Activated B cell treated with CpG ODN at 0.5 μM for 24 hours (primary cell): ENCODE measurements at regions of chr16 and their contacts with region 1.

Region 1: DNA sequence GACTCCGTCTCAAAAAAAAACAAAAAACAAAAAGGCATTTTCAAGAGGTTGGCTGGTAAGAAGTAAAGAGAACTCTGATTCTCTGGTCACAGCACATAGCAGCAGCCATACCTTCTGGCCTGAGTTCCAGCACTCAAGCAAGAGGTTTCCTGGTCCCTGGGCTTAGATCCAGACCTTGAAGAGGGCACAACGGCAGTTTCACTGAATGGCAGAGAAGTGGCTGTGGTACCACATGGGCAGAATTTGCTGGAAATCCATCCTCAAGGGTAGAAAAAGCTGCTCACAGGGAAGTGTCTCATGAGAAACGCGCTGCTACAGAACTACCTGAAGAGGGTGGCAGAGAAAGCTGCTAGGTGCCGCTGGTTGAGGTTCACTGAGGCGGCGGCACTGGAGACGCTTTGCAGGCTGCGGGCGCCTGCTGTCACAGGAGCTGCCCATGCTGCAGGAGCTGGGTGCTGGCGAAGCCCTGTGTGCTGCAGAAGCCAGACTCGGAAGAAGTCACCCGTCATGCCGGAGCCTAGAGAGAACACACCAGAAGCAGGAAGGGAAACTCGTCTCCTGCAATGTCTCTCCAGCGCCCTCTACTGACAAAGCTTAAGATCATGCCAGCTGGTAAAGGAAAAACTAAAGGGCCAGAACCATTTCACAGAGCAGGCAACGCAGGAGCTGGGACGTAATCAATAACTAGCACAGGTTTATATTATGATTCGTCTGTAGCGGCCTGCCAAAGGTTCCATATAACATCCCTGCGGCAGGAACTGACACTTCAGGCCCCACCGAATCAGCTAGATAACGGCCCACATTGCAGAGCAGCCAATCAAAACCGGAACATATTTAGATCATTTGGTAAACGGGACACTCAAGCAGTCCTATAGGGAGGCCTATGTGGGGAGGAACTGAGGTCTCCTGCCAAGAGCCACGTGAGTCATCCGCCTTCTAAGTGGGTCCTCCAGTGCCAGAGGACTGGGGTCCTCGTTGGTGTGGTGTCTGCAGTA is 5.4 kb upstream of the ZNF213 start:
- DNase-seq: peak; percentile 55
- ATAC-seq: peak; percentile 71
- H3K4me3 Mint-ChIP-seq: peak overlapping the region; percentile 92
- H3K27ac Mint-ChIP-seq: peak overlapping the region; percentile 89
- H3K4me1 Mint-ChIP-seq: peaks cover 43% of the 10 kb centered on the region
- H3K27me3 Mint-ChIP-seq: no peaks in the 10 kb centered on the region
- CTCF ChIP-seq: peak; percentile 95

Region 2: GRCh38 chr16:3003582-3004302 is 125.7 kb before region 1 on chr16:
- CTCF ChIA-PET with region 1: interaction called, 14 read pairs
- POLR2A ChIA-PET with region 1: interaction called, 5 read pairs
- intact Hi-C with region 1: no loop called
- DNase-seq: peak; percentile 87
- ATAC-seq: peak; percentile 98
- H3K4me3 Mint-ChIP-seq: peak overlapping the region; percentile 67
- H3K27ac Mint-ChIP-seq: peak overlapping the region; percentile 53
- H3K4me1 Mint-ChIP-seq: peaks cover 28% of the 10 kb centered on the region
- H3K27me3 Mint-ChIP-seq: peaks cover 11% of the 10 kb centered on the region
- CTCF ChIP-seq: no peak

Region 3: DNA sequence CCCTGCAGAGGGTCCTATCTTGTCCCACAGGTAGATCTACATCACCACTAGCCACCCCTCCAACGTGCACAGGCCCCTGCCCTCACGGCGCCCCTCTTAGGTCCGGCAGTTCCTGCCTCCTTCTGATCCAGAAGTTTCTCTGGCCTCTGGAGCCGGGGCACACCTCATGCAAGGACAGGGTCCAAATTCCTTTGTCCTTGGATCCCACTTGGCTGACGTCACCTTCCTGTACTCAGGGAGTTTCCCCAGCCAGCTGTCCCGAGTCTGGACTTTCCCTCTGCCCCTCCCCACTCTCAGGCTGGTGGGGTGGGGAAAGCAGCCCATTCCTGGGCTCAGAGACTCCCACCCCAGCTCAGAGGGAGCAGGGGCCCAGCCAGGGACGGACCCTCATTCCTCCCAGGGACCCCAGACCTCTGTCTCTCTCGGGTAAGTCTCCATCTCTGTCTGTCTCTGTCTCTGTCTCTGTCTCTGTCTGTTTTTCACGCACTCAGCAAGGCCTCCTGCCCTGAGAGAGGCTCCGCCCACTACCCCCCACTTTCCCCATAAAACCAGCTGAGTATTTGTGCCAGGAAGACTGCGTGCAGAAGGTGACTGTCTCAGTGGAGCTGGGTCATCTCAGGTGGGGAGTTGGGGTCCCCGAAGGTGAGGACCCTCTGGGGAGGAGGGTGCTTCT is 64.2 kb before region 1 on chr16 and contains the start of gene IL32:
- CTCF ChIA-PET with region 1: interaction called, 61 read pairs
- POLR2A ChIA-PET with region 1: interaction called, 31 read pairs
- intact Hi-C with region 1: no loop called
- DNase-seq: no peak
- ATAC-seq: no peak
- H3K4me3 Mint-ChIP-seq: no peak within 1 kb of the TSS
- H3K27ac Mint-ChIP-seq: no peak within 1 kb of the TSS
- H3K4me1 Mint-ChIP-seq: peaks cover 9% of the 10 kb centered on the region
- H3K27me3 Mint-ChIP-seq: no peaks in the 10 kb centered on the region
- CTCF ChIP-seq: no peak
- total RNA-seq, gene IL32: 3.0 and 3.4 TPM in 2 replicates

Region 4: DNA sequence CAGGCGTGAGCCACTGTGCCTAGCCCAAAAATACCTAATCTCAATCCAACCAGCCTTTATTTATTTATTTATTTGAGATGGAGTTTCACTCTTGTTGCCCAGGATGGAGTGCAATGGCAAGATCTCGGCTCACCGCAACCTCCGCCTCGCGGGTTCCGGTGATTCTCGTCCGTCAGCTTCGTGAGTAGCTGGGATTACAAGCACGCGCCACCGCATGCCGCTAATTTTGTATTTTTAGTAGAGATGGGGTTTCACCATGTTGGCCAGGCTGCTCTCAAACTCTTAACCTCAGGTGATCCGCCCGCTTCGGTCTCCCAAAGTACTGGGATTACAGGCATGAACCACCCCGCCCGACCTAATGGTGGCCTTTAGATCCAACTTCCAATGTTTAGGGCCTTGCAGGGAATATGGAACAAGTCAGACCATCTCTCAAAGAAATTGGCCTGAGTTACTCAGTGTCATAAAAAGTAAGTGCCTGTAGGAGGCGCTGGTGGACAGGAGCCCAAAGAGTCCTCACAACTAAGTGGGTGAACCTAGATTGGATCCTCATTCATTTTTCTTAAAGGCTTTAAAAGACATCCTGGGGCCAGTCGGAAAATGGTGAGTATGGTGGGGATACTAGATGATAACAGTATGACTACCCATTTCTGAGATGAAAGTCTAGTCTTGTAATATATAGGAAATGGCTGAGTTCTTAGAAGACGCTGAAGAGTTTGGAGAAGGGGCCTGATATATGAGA is 35.0 kb before region 1 on chr16:
- CTCF ChIA-PET with region 1: interaction called, 56 read pairs
- POLR2A ChIA-PET with region 1: interaction called, 34 read pairs
- intact Hi-C with region 1: loop called (anchors 1 kb)
- DNase-seq: no peak
- ATAC-seq: no peak
- H3K4me3 Mint-ChIP-seq: no peak overlapping the region
- H3K27ac Mint-ChIP-seq: peak overlapping the region; percentile 26
- H3K4me1 Mint-ChIP-seq: peaks cover 16% of the 10 kb centered on the region
- H3K27me3 Mint-ChIP-seq: no peaks in the 10 kb centered on the region
- CTCF ChIP-seq: no peak

Region 5: GRCh38 chr16:3106205-3106928 is 23.1 kb before region 1 on chr16:
- CTCF ChIA-PET with region 1: interaction called, 13 read pairs
- POLR2A ChIA-PET with region 1: interaction called, 18 read pairs
- intact Hi-C with region 1: loop called (anchors 1 kb)
- DNase-seq: peak; percentile 84
- ATAC-seq: peak; percentile 96
- H3K4me3 Mint-ChIP-seq: peak overlapping the region; percentile 79
- H3K27ac Mint-ChIP-seq: peak overlapping the region; percentile 73
- H3K4me1 Mint-ChIP-seq: peaks cover 27% of the 10 kb centered on the region
- H3K27me3 Mint-ChIP-seq: peaks cover 1% of the 10 kb centered on the region
- CTCF ChIP-seq: no peak

Region 6: DNA sequence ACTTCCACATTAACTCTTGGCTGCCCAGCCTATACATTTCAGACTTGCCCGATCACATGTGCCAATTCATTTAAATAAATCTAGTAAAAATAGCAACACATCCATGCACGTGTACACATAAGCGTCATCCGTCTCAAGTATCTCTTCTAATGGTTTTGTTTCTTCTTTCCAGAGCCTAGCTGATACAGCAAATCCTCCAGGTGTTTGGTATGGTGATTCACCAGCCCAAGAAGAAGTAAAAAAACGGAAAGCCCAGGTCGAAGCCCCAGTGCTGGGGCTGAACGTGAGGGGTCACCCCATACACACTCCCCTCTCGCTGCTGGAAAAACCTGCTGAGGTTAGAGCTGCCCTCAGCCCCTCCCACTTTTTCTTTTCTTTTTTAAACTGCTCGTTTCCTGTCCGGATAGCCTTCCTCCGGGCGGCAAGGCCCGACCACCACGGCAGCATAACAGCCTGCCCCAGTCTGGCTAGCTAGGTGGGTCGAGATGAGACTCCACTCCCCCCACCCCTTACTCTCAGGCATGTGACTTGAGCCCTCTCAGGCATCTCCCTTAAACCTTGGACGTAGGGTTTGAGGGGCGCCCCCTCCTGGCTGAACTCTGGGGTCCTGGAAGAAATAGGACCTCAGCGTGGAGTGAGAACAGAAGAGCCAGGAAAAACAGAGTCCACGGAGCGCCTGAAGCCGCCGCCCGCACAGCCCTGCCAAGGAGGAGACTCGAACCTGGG is 44.6 kb after region 1 on chr16:
- CTCF ChIA-PET with region 1: interaction called, 15 read pairs
- POLR2A ChIA-PET with region 1: no interaction called
- intact Hi-C with region 1: no loop called
- DNase-seq: no peak
- ATAC-seq: peak; percentile 10
- H3K4me3 Mint-ChIP-seq: peak overlapping the region; percentile 24
- H3K27ac Mint-ChIP-seq: peak overlapping the region; percentile 12
- H3K4me1 Mint-ChIP-seq: peaks cover 31% of the 10 kb centered on the region
- H3K27me3 Mint-ChIP-seq: peaks cover 56% of the 10 kb centered on the region
- CTCF ChIP-seq: no peak

Region 7: GRCh38 chr16:3328643-3329042 is 199.2 kb after region 1 on chr16:
- CTCF ChIA-PET with region 1: no interaction called
- POLR2A ChIA-PET with region 1: no interaction called
- intact Hi-C with region 1: no loop called
- DNase-seq: no peak
- ATAC-seq: no peak
- H3K4me3 Mint-ChIP-seq: no peak overlapping the region
- H3K27ac Mint-ChIP-seq: no peak overlapping the region
- H3K4me1 Mint-ChIP-seq: no peaks in the 10 kb centered on the region
- H3K27me3 Mint-ChIP-seq: no peaks in the 10 kb centered on the region
- CTCF ChIP-seq: no peak